WTC11 (cell line): ENCODE measurements at regions of chr10 and their contacts with region 1.

Region 1: DNA sequence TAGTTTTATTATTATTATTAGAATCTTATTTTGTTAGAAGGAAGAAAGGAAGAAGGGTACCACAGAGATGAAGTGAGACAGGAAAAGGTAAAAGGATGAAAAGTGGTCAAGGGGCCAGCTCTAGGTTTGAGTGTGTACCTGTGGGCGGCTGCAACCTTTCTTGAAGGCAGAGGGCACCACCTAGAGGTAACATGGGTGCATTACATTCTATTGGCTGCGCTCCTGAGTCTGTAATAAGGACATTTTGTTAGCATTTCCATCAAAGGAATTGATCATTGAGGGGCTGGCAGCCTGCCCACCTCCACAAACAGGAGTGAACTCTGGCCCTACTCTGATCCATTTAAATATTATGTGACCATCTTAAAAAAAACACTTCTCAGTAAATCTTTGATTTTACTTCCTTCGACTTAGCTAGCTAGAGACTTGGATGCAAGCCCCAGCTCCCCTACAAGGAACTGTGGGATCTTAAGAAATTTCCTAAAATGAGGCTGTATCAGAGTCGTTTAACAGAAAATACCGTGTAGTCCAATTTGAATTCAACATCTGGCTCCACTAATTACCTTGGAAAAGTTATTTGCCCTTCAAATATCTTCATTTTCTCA is 610.4 kb downstream of the IPMK start:
- DNase-seq: peak; percentile 68
- ATAC-seq: peak; percentile 98
- H3K4me3 Mint-ChIP-seq: no peak overlapping the region
- H3K27ac Mint-ChIP-seq: no peak overlapping the region
- H3K4me1 Mint-ChIP-seq: peaks cover 15% of the 10 kb centered on the region
- H3K27me3 Mint-ChIP-seq: no peaks in the 10 kb centered on the region
- CTCF ChIP-seq: peak; percentile 78; the same call in 1 of the 2 replicates

Region 2: DNA sequence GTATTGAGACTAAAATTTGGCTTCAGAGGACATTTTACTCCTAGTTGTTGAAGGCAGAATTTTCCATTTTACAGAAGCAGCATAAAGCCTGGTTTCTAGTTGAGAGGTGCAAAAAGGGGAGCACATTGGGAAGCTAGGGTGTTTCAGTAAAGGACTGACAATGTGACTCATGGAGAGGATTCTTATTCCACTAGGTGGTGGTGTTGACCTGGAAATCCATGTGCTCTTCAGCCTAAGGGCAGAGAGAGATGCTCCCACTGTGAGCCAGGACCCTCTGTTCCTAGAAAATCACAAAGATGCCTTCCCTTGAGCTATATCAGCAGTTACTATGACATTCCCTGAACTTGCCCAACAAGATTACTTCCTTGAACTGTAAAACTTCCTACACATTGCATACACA is 77.3 kb before region 1 on chr10:
- CTCF ChIA-PET with region 1: interaction called, 101 read pairs
- POLR2A ChIA-PET with region 1: interaction called, 4 read pairs
- DNase-seq: peak; percentile 36
- ATAC-seq: peak; percentile 99
- H3K4me3 Mint-ChIP-seq: no peak overlapping the region
- H3K27ac Mint-ChIP-seq: no peak overlapping the region
- H3K4me1 Mint-ChIP-seq: peaks cover 3% of the 10 kb centered on the region; the same call in 1 of the 2 replicates
- H3K27me3 Mint-ChIP-seq: no peaks in the 10 kb centered on the region; the same call in 1 of the 2 replicates
- CTCF ChIP-seq: peak; percentile 54

Region 3: DNA sequence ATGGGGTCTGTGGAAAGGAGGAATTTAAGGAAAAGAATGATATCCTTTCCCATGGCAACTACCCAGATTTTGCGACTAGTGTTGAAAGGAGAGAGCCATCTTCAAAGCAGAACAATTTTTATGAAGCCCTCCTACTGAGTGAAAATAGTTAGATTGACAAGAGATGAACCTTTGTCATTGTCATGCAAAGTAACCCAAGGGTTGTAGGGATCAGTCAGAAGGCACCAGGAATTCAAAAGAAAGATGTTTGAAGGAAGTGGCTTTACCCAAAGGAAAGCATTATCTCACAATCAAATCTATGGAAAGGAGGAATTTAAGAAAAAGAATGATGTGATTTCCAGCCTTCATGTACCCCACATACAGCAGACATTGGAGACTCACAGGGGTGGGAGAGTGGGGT is 66.0 kb after region 1 on chr10:
- CTCF ChIA-PET with region 1: no interaction called
- POLR2A ChIA-PET with region 1: no interaction called
- DNase-seq: no peak
- ATAC-seq: peak; percentile 43; the same call in 1 of the 2 replicates
- H3K4me3 Mint-ChIP-seq: no peak overlapping the region
- H3K27ac Mint-ChIP-seq: no peak overlapping the region
- H3K4me1 Mint-ChIP-seq: peaks cover 24% of the 10 kb centered on the region
- H3K27me3 Mint-ChIP-seq: no peaks in the 10 kb centered on the region
- CTCF ChIP-seq: no peak